Naive thymus-derived CD4-positive, alpha-beta T cell (primary cell): ENCODE measurements at regions of chr1 and their contacts with region 1.

Region 1: GRCh38 chr1:112715264-112716053 is at the start of gene PPM1J:
- DNase-seq: peak; percentile 86 to 99 (median 91)
- ATAC-seq: peak; percentile 89
- H3K4me3 ChIP-seq: peak within 1 kb of the TSS; percentile 81
- H3K4me3 Mint-ChIP-seq: peak within 1 kb of the TSS; percentile 86 to 95 (median 92)
- H3K27ac ChIP-seq: peak within 1 kb of the TSS; percentile 34
- H3K27ac Mint-ChIP-seq: peak within 1 kb of the TSS in 8 of 9 donors; percentile 63 to 91 (median 82)
- H3K4me1 ChIP-seq: peaks cover 13% of the 10 kb centered on the region in 2 donors
- H3K4me1 Mint-ChIP-seq: peaks cover 17 to 37% (median 21%) of the 10 kb centered on the region in 7 donors
- H3K27me3 ChIP-seq: no peaks in the 10 kb centered on the region
- H3K27me3 Mint-ChIP-seq: peaks cover 0 to 45% (median 12%) of the 10 kb centered on the region in 5 donors
- total RNA-seq, gene PPM1J: 0.46 to 1.6 (median 0.50) TPM in 3 of 5 experiments, not detected in the others

Region 2: DNA sequence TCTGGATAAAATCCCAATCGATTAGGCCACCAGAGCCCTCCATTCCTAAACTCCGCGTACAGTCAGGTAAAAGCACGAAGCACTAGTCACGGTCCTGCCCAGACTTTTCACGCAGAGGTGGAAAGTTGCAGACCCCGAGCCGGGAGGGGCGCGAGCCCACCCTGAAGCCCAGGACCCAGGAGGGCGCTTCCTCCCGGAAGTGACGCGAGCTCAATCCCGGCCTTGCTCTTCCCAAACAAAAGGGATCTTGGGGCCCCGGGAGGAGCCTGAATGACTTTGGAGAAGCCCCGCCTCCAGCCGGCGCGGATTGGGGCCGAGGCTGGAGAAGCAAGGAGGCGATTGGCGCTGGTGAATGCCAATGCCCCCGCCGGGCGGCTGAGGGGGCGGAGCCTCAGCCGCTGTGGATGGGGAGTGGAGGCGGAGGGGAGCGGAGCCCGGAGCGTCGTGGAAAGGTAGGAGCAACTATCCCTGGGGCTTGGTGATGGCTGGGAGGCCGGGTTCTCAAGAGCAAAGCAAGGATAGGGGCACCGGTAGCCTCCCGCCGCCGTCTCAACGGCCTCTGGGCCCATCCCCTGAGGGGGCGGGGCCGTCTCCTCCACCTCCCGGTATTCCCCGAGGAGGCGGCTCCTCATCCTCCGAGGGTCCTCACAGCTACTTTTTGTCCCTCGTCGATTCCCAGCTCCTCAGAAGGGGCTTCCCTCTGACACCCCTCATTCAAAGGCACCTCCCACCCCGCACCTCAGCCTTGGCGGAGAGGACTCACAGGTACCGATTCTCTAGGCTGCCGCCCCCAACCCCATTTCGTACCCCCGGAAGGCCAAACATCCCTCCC is 319.4 kb before region 1 on chr1 and contains the start of gene CTTNBP2NL:
- CTCF ChIA-PET with region 1: no interaction called
- POLR2A ChIA-PET with region 1: no interaction called
- intact Hi-C with region 1: loop called (anchors 1 to 2 kb)
- DNase-seq: peak; percentile 40 to 83 (median 67)
- ATAC-seq: peak; percentile 95
- H3K4me3 ChIP-seq: peak within 1 kb of the TSS; percentile 91
- H3K4me3 Mint-ChIP-seq: peak within 1 kb of the TSS; percentile 80 to 95 (median 92)
- H3K27ac ChIP-seq: peak within 1 kb of the TSS; percentile 32
- H3K27ac Mint-ChIP-seq: peak within 1 kb of the TSS in 8 of 9 donors; percentile 6 to 88 (median 60)
- H3K4me1 ChIP-seq: peaks cover 7 to 14% of the 10 kb centered on the region in 2 donors
- H3K4me1 Mint-ChIP-seq: peaks cover 13 to 37% (median 20%) of the 10 kb centered on the region in 7 donors
- H3K27me3 ChIP-seq: peaks cover 0 to 3% of the 10 kb centered on the region in 2 donors
- H3K27me3 Mint-ChIP-seq: peaks cover 13 to 26% (median 18%) of the 10 kb centered on the region in 5 donors
- total RNA-seq, gene CTTNBP2NL: 0.32 to 1.8 (median 0.90) TPM

Region 3: GRCh38 chr1:112803906-112804762 is 88.7 kb after region 1 on chr1:
- CTCF ChIA-PET with region 1: interaction called, 5 read pairs
- POLR2A ChIA-PET with region 1: no interaction called
- intact Hi-C with region 1: loop called (anchors 1 kb)
- DNase-seq: peak in 7 of 9 donors; percentile 5 to 56 (median 20)
- ATAC-seq: peak; percentile 80
- H3K4me3 ChIP-seq: no peak overlapping the region
- H3K4me3 Mint-ChIP-seq: no peak overlapping the region
- H3K27ac ChIP-seq: no peak overlapping the region
- H3K27ac Mint-ChIP-seq: peak overlapping the region in 1 of 9 donors; percentile 15
- H3K4me1 ChIP-seq: no peaks in the 10 kb centered on the region
- H3K4me1 Mint-ChIP-seq: no peaks in the 10 kb centered on the region
- H3K27me3 ChIP-seq: no peaks in the 10 kb centered on the region
- H3K27me3 Mint-ChIP-seq: peaks cover 0 to 18% (median 0%) of the 10 kb centered on the region in 5 donors

Region 4: DNA sequence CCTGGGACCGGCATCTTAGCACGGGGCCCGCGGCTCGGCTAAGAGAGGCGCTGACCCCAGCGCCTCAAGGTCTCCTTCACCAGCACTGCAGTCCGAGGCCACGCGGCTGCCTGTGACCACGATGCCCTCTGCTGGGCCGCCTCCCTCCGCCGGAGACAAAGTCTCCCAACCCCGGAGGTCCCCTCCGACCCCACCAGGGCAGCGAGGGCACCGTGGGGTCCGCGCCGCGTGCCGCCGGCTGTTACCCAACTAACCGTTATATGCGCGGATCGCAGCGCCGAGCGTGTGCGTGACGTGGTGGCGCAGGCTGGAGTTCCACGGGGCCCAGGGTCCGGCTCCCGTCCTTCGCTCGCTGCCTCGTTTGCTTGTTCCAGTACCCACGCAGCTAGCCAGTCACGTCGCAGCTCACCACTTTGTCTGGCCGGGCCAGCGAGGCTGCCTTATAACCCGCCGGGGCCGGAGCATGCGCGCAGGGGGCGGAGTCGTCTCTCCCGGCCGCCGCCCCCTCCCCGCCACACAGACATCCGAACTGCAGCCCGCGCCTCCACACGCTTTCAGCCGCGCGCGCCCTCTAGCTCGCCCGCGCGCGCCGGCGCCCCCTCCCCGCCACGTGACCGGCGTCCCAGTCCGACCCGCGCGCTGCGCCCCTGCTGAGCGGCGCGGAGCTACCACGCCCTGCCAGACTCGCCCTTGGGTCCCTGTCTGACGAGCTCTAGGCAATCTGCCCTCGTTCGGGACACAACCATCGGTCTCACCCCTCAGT is 240.5 kb after region 1 on chr1 and contains the start of gene SLC16A1:
- CTCF ChIA-PET with region 1: no interaction called
- POLR2A ChIA-PET with region 1: no interaction called
- intact Hi-C with region 1: loop called (anchors 1 kb)
- DNase-seq: peak; percentile 80 to 94 (median 87)
- ATAC-seq: peak; percentile 90
- H3K4me3 ChIP-seq: peak within 1 kb of the TSS; percentile 97
- H3K4me3 Mint-ChIP-seq: peak within 1 kb of the TSS; percentile 71 to 100 (median 97)
- H3K27ac ChIP-seq: peak within 1 kb of the TSS; percentile 81
- H3K27ac Mint-ChIP-seq: peak within 1 kb of the TSS; percentile 25 to 100 (median 88)
- H3K4me1 ChIP-seq: peaks cover 16 to 17% of the 10 kb centered on the region in 2 donors
- H3K4me1 Mint-ChIP-seq: peaks cover 33 to 66% (median 57%) of the 10 kb centered on the region in 7 donors
- H3K27me3 ChIP-seq: no peaks in the 10 kb centered on the region
- H3K27me3 Mint-ChIP-seq: no peaks in the 10 kb centered on the region
- total RNA-seq, gene SLC16A1: 10.1 to 43.6 (median 19.1) TPM

Region 5: DNA sequence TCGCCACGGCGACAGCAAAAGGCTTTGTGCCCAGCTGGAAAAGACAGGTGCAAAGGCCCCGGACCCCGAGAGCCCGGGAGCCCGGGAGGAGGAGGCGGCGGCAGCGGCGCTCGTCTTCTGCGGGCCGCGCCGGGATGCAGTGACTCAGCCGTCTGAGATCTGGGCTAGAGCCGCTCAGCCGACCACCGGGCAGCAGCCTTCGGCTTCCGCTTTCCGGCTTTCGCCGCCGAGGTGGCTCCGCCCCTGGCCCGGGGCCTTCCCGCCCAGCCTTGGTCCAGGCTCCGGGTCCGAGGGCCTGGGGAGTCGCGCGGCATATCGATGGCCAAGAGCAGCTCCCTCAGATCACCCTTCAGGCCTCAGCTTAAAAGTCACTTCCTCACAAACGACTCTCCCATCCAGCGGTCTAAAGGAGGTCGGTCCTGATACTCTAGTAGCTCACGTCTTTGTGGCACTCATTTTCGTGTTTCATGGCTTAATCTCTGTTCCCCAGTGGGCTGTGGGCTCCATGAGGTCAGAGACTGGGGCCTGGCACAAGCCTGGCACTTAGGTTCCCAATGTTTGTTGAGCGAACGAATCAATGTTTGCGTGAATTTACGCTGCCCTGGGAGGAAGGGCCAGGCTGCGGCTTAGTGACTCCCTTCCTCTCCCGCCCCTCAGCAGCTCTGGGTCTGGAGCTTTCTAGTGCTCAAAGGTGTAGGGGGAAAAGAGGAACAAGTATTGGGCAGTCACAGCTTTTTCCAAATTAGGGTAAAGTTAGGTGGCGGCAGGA is 1044.1 kb after region 1 on chr1 and contains the start of gene PHTF1:
- CTCF ChIA-PET with region 1: no interaction called
- POLR2A ChIA-PET with region 1: no interaction called
- intact Hi-C with region 1: loop called in 1 of 2 experiments (anchors 2 kb)
- DNase-seq: peak in 8 of 9 donors; percentile 14 to 74 (median 23)
- ATAC-seq: peak; percentile 88
- H3K4me3 ChIP-seq: peak within 1 kb of the TSS; percentile 81
- H3K4me3 Mint-ChIP-seq: peak within 1 kb of the TSS; percentile 91 to 97 (median 93)
- H3K27ac ChIP-seq: peak within 1 kb of the TSS; percentile 74
- H3K27ac Mint-ChIP-seq: peak within 1 kb of the TSS; percentile 87 to 96 (median 90)
- H3K4me1 ChIP-seq: peaks cover 0 to 16% of the 10 kb centered on the region in 2 donors
- H3K4me1 Mint-ChIP-seq: peaks cover 0 to 36% (median 24%) of the 10 kb centered on the region in 7 donors
- H3K27me3 ChIP-seq: no peaks in the 10 kb centered on the region
- H3K27me3 Mint-ChIP-seq: no peaks in the 10 kb centered on the region
- total RNA-seq, gene PHTF1: 2.5 to 21.0 (median 7.1) TPM

Region 6: GRCh38 chr1:113904674-113905434 is 1189.4 kb after region 1 on chr1 and contains the starts of genes AP4B1 and DCLRE1B:
- CTCF ChIA-PET with region 1: no interaction called
- POLR2A ChIA-PET with region 1: no interaction called
- intact Hi-C with region 1: loop called in 1 of 2 experiments (anchors 1 kb)
- DNase-seq: peak; percentile 88 to 98 (median 97)
- ATAC-seq: peak; percentile 96
- H3K4me3 ChIP-seq: peak within 1 kb of the TSS; percentile 82
- H3K4me3 Mint-ChIP-seq: peak within 1 kb of the TSS; percentile 92 to 100 (median 99)
- H3K27ac ChIP-seq: peak within 1 kb of the TSS; percentile 89
- H3K27ac Mint-ChIP-seq: peak within 1 kb of the TSS; percentile 96 to 100 (median 99)
- H3K4me1 ChIP-seq: peaks cover 15 to 21% of the 10 kb centered on the region in 2 donors
- H3K4me1 Mint-ChIP-seq: peaks cover 36 to 62% (median 54%) of the 10 kb centered on the region in 7 donors
- H3K27me3 ChIP-seq: no peaks in the 10 kb centered on the region
- H3K27me3 Mint-ChIP-seq: peaks cover 0 to 4% (median 0%) of the 10 kb centered on the region in 5 donors
- total RNA-seq, gene AP4B1: 50.8 to 75.4 (median 65.0) TPM
- total RNA-seq, gene DCLRE1B: 4.1 to 13.6 (median 6.9) TPM

Region 7: GRCh38 chr1:114716304-114717170 is 2001.1 kb after region 1 on chr1 and contains the start of gene NRAS:
- CTCF ChIA-PET with region 1: no interaction called
- POLR2A ChIA-PET with region 1: no interaction called
- intact Hi-C with region 1: loop called in 1 of 2 experiments (anchors 5 kb)
- DNase-seq: peak; percentile 90 to 96 (median 94)
- ATAC-seq: peak; percentile 98
- H3K4me3 ChIP-seq: peak within 1 kb of the TSS; percentile 98
- H3K4me3 Mint-ChIP-seq: peak within 1 kb of the TSS; percentile 91 to 100 (median 96)
- H3K27ac ChIP-seq: peak within 1 kb of the TSS; percentile 98
- H3K27ac Mint-ChIP-seq: peak within 1 kb of the TSS; percentile 93 to 99 (median 97)
- H3K4me1 ChIP-seq: peaks cover 17 to 20% of the 10 kb centered on the region in 2 donors
- H3K4me1 Mint-ChIP-seq: peaks cover 10 to 34% (median 25%) of the 10 kb centered on the region in 7 donors
- H3K27me3 ChIP-seq: no peaks in the 10 kb centered on the region
- H3K27me3 Mint-ChIP-seq: no peaks in the 10 kb centered on the region
- total RNA-seq, gene NRAS: 22.3 to 56.0 (median 25.0) TPM